Sigmoid colon (tissue), 7 donors: ENCODE measurements at regions of chr11 and their contacts with region 1.

Region 1: DNA sequence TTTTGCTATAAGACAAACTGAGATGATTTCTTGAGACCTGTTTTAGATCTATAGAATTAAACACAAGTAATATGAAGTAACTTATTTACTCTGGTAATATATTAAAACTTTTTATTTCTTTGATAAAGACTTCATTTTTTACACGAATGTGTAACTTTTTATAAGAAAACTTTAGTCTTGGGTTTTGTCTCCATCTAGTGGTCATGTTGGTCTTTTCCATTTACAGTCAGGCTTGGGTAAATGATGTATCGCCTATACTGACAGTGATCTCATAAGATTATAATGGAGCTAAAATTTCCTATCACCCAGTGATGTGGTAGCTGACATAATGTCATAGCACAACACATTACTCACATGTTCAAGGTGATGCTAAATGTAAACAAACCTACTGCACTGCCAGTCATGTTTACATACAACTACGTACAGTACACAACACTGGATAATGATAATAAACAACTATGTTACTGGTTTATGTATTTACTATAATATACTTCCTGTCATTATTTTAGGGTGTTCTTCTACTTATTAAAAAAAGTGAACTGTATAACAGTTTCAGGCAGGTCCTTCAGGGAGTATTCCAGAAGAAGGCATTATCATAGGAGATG is 7.5 kb upstream of the C11orf97 start:
- DNase-seq: no peak
- H3K4me3 ChIP-seq: no peak overlapping the region
- H3K27ac ChIP-seq: no peak overlapping the region
- H3K4me1 ChIP-seq: no peaks in the 10 kb centered on the region
- H3K27me3 ChIP-seq: no peaks in the 10 kb centered on the region
- CTCF ChIP-seq: peak; percentile 9 to 68 (median 48)
- EP300 ChIP-seq: no peak
- POLR2A ChIP-seq: no peak

Region 2: GRCh38 chr11:93895106-93895862 is 609.5 kb before region 1 on chr11:
- intact Hi-C with region 1: loop called (anchors 5 kb)
- DNase-seq: no peak
- H3K4me3 ChIP-seq: no peak overlapping the region
- H3K27ac ChIP-seq: no peak overlapping the region
- H3K4me1 ChIP-seq: no peaks in the 10 kb centered on the region
- H3K27me3 ChIP-seq: no peaks in the 10 kb centered on the region
- CTCF ChIP-seq: peak in 3 of 4 experiments; percentile 47 to 64 (median 64)
- EP300 ChIP-seq: no peak
- POLR2A ChIP-seq: no peak

Region 3: DNA sequence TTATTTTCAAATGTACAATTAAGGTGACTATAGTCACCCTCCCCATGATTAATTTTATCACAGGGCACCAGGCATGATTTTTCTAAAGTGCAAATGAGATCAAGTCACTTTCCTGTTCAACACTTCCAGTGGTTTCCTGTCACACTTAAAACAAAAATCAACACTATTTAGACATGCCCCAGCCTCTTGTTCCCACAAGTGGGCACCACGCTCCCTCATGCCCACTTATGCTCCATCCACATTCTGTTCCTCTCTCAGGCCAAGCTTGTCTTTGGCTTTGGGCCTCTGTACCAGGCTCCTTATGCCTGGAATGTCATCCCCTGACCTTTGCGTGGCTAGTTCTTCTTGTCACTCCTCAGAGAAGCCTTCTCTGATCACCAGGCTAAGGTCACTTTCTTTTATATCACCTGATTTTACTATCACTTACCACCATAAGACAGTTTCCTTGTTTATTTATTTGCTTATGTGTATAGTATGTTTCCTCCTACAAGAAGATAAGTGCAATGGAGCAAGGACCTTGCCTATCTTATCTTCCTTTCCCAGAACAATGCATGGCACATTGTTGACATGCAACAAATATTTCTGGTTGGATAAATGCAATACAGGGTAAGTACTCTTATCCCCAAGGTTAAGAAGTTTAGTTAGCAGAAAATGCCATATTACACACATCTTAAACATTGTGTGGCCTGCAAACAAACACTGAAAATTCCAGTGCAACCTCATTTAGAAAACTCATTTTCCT is 427.1 kb before region 1 on chr11:
- intact Hi-C with region 1: no loop called
- DNase-seq: no peak
- H3K4me3 ChIP-seq: no peak overlapping the region
- H3K27ac ChIP-seq: no peak overlapping the region
- H3K4me1 ChIP-seq: no peaks in the 10 kb centered on the region
- H3K27me3 ChIP-seq: no peaks in the 10 kb centered on the region
- CTCF ChIP-seq: no peak
- EP300 ChIP-seq: no peak
- POLR2A ChIP-seq: no peak

Region 4: DNA sequence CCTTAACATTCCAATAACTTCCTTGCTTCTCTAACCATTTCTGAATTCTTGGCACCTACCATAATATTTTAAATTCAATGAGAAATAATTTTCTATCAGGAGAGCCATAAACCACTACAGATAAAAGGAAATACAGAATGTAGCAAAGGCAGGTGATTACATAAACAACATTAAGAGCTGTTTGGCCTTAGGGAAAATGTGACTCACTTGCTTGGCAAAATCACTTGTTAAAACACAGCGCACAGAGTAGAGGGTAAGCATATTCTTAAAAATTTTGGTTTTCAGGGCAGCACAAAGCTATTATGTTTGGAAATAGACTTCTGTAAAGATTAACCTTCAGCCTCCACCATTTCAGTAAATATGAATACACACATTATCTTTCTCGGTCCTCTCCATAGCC is 174.0 kb before region 1 on chr11:
- intact Hi-C with region 1: no loop called
- DNase-seq: no peak
- H3K4me3 ChIP-seq: no peak overlapping the region
- H3K27ac ChIP-seq: peak overlapping the region in 1 of 4 donors; percentile 9
- H3K4me1 ChIP-seq: peaks cover 0 to 22% (median 11%) of the 10 kb centered on the region in 4 donors
- H3K27me3 ChIP-seq: no peaks in the 10 kb centered on the region
- CTCF ChIP-seq: no peak
- EP300 ChIP-seq: no peak
- POLR2A ChIP-seq: no peak

Region 5: DNA sequence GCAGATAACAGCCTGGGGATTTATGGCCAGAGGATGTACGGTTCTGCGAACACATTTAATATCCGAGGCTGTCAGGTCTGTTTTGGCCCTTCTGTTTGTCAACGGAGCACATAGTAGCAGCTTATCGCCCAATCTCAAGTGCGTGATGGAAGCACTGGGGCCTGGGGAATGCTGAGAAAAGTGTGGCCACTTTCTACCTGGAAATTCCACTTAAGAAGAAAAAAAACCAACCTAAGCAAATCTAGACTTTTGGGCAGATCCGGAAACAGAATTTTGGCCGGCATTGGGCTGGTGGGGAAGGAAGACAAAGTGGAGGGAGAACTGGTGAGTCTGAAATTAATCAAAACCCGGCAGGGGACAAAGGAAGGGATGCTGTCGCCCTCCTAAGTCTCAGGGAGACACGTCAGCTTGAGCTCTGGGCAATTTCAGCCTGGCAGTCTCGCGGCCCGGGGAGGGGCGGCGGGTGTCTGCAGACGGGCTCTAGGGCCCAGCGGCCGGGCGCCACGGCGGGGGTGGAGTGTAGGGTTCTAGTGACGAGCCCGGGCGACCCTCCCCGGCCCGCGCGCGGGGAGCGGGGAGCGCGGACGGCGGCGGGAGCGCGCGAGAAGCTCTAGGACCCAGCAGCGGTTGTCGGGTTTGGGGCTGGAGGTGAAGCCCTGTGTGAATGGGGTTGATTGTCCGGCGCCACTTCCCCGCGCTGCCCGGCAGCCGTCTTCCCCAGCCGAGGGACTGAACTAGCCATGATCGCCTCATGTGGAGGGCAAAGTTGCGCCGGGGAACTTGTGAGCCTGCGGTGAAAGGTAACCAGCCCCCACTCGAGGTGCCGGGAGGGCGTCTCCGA is 263.2 kb after region 1 on chr11 and contains the start of gene AMOTL1:
- intact Hi-C with region 1: no loop called
- DNase-seq: peak; percentile 96
- H3K4me3 ChIP-seq: peak within 1 kb of the TSS; percentile 84 to 95 (median 91)
- H3K27ac ChIP-seq: peak within 1 kb of the TSS; percentile 97 to 99 (median 98)
- H3K4me1 ChIP-seq: peaks cover 0 to 77% (median 59%) of the 10 kb centered on the region in 4 donors
- H3K27me3 ChIP-seq: no peaks in the 10 kb centered on the region
- CTCF ChIP-seq: no peak
- EP300 ChIP-seq: peak in 2 of 4 donors; percentile 7 to 61
- POLR2A ChIP-seq: peak in 1 of 2 donors; percentile 74
- total RNA-seq, gene AMOTL1: 96.3 to 161 (median 115) TPM